OCI-LY7 (cell line): ENCODE measurements at regions of chrX and their contacts with region 1.

Region 1: GRCh38 chrX:134460005-134460861 is at the start of gene HPRT1:
- DNase-seq: peak; percentile 87
- H3K4me3 ChIP-seq: peak within 1 kb of the TSS; percentile 95
- H3K27ac ChIP-seq: peak within 1 kb of the TSS; percentile 64
- H3K4me1 ChIP-seq: peaks cover 32% of the 10 kb centered on the region
- CTCF ChIP-seq: no peak
- total RNA-seq, gene HPRT1: 13.5 and 14.5 TPM in 2 replicates

Region 2: GRCh38 chrX:134388161-134389109 is 71.8 kb before region 1 on chrX:
- CTCF ChIA-PET with region 1: no interaction called
- POLR2A ChIA-PET with region 1: no interaction called
- intact Hi-C with region 1: loop called (anchors 5 kb)
- DNase-seq: peak; percentile 81
- H3K4me3 ChIP-seq: peak overlapping the region; percentile 44
- H3K27ac ChIP-seq: peak overlapping the region; percentile 73
- H3K4me1 ChIP-seq: peaks cover 38% of the 10 kb centered on the region
- CTCF ChIP-seq: no peak

Region 3: GRCh38 chrX:134423615-134424014 is 36.6 kb before region 1 on chrX:
- CTCF ChIA-PET with region 1: no interaction called
- POLR2A ChIA-PET with region 1: interaction called, 6 read pairs
- intact Hi-C with region 1: loop called (anchors 1 kb)
- DNase-seq: peak; percentile 21
- H3K4me3 ChIP-seq: no peak overlapping the region
- H3K27ac ChIP-seq: no peak overlapping the region
- H3K4me1 ChIP-seq: no peaks in the 10 kb centered on the region
- CTCF ChIP-seq: peak; percentile 58

Region 4: GRCh38 chrX:134443020-134443419 is 17.2 kb before region 1 on chrX:
- CTCF ChIA-PET with region 1: interaction called, 3 read pairs
- POLR2A ChIA-PET with region 1: interaction called, 5 read pairs
- intact Hi-C with region 1: loop called (anchors 2 kb)
- DNase-seq: peak; percentile 64
- H3K4me3 ChIP-seq: no peak overlapping the region
- H3K27ac ChIP-seq: peak overlapping the region; percentile 73
- H3K4me1 ChIP-seq: peaks cover 29% of the 10 kb centered on the region
- CTCF ChIP-seq: no peak